ENCODE measurements at regions of chr7 and their contacts with region 1.

Region 1: DNA sequence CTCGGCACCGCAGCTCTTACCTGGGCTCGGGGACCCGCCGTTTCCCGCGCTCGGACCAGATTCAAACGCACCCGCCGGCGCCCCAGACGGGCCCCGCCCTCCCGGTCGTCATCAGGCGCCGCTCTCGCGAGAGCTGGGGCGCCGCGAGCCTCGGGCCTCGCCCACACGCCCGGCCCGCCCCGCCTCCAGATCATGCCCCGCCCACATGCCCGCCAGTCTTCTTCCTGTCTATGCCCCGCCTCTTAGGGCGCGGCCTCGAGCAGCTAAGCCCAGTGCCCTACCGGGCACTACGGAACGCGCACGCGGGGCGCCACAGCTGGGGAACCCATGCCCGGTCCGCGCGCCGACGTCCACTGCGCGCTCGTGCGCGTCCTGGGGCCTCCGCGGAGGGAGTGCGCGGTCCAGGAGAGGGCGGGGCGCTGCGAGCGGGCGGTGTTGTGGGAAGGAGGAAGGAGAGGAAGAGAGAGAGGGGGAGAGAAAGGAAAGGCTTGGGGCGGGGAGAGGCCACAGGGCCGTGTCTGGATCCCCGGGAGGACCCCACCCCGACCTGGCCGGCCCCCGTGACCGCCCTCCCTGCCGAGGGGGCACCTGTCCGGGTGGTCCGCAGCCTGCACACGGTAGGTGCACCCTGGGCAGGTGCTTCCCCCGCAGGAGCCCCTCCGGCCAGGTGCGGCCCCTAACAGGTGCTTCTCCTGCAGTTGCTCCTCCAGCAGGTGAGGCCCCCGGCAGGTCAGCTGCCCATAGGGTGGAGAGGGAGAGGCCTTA is at the start of gene NCAPG2:
- DNase-seq: peak; percentile 99
- H3K4me3 ChIP-seq: peak within 1 kb of the TSS; percentile 52 to 89 (median 68)
- H3K27ac ChIP-seq: peak within 1 kb of the TSS; percentile 18 to 88 (median 81)
- H3K4me1 ChIP-seq: peaks cover 0 to 6% of the 10 kb centered on the region in 2 donors
- H3K27me3 ChIP-seq: no peaks in the 10 kb centered on the region
- CTCF ChIP-seq: peak in 3 of 6 experiments; percentile 37 to 63 (median 42)
- POLR2A ChIP-seq: peak in 1 of 2 donors; percentile 96
- total RNA-seq, gene NCAPG2: 6.7 to 8.3 (median 7.7) TPM

Region 2: GRCh38 chr7:158061026-158061630 is 643.8 kb before region 1 on chr7:
- intact Hi-C with region 1: no loop called
- DNase-seq: no peak
- H3K4me3 ChIP-seq: no peak overlapping the region
- H3K27ac ChIP-seq: no peak overlapping the region
- H3K4me1 ChIP-seq: no peaks in the 10 kb centered on the region
- H3K27me3 ChIP-seq: no peaks in the 10 kb centered on the region
- CTCF ChIP-seq: no peak
- POLR2A ChIP-seq: no peak

Region 3: GRCh38 chr7:158595069-158595468 is 109.8 kb before region 1 on chr7:
- intact Hi-C with region 1: no loop called
- DNase-seq: no peak
- H3K4me3 ChIP-seq: no peak overlapping the region
- H3K27ac ChIP-seq: no peak overlapping the region
- H3K4me1 ChIP-seq: no peaks in the 10 kb centered on the region
- H3K27me3 ChIP-seq: no peaks in the 10 kb centered on the region
- CTCF ChIP-seq: no peak
- POLR2A ChIP-seq: no peak

Region 4: DNA sequence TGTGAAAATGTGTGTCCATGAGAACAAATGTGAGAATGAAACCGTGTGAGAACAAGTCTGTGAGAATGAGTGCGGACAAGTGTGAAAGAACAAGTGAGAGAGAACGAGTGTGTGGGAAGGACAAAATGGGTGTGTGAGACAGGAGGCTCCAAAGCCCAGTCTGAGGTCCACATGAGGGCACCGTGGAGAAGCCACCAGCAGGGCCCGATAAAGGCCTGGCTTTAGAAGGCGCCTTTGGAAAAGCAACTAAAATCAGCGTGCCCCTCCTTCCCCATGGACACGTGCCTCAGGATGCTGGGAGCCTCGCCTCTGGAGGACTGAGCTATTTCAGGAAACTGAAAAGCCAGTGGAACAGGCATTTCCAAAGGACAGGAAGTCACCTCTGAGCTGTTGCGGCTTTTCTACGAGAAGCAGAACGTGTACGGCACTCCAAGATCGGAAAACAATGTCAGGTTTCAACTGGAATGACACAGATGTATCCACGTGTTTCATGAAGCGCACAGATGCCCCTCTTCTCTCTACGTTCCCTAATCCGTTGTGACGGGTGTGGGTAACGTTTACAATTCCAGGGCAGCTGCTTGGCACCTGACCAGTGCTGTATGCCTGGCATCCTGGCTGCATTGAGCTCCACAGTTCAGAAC is 78.0 kb after region 1 on chr7:
- intact Hi-C with region 1: no loop called
- DNase-seq: peak in 1 of 2 donors; percentile 18
- H3K4me3 ChIP-seq: no peak overlapping the region
- H3K27ac ChIP-seq: peak overlapping the region in 2 of 3 donors; percentile 37 to 63
- H3K4me1 ChIP-seq: peaks cover 6 to 15% of the 10 kb centered on the region in 2 donors
- H3K27me3 ChIP-seq: no peaks in the 10 kb centered on the region
- CTCF ChIP-seq: peak in 1 of 6 experiments; percentile 20
- POLR2A ChIP-seq: no peak

Region 5: DNA sequence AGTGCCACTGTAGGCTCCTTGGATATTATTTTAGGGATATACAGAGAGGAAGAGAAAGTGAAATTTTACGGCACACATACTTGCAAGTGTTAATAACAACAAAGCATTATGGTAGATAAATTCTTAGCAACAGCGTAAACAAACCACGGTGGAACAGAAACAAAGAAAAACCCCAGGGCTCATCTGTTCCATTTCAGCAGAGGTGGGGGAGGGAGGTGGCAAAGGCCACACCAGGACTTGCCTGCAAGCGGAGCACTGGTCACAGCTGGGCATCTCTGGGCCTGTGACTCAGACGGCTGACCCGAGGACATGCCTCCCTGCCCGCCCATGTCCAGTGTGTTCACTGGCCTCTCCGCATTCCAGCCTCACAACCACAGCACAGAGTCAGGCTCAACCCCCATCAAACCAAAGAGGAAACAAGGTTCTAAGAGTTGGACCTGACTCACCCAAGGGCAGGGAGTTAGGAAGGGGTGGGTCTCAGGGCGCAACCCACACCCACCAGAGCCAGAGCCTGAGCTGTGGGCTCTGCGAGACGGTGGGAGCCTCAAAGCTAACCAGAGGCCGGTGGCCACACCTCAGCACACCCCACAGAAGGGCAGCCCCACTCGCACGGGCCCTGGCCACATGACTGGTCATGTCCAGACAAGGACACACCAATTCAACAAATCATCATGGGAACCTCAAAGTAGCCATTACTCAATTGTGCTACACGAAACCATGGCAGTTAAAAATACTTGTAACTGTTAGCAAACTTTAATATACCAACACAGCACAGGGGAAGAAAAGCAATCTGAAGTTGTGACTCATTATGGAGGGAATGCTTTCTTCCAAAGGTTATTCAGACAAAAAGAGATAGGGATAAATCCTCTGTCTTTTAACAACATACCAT is 113.7 kb after region 1 on chr7:
- intact Hi-C with region 1: no loop called
- DNase-seq: peak; percentile 79 to 90
- H3K4me3 ChIP-seq: no peak overlapping the region
- H3K27ac ChIP-seq: peak overlapping the region; percentile 79 to 92 (median 87)
- H3K4me1 ChIP-seq: peaks cover 38 to 76% of the 10 kb centered on the region in 2 donors
- H3K27me3 ChIP-seq: no peaks in the 10 kb centered on the region
- CTCF ChIP-seq: no peak
- POLR2A ChIP-seq: peak in 1 of 2 donors; percentile 31

Region 6: GRCh38 chr7:158829342-158830210 is 124.7 kb after region 1 on chr7 and contains the start of gene ESYT2:
- intact Hi-C with region 1: loop called (anchors 10 kb)
- DNase-seq: peak; percentile 98
- H3K4me3 ChIP-seq: peak within 1 kb of the TSS; percentile 42 to 98 (median 88)
- H3K27ac ChIP-seq: peak within 1 kb of the TSS; percentile 99 to 100 (median 100)
- H3K4me1 ChIP-seq: peaks cover 13 to 19% of the 10 kb centered on the region in 2 donors
- H3K27me3 ChIP-seq: no peaks in the 10 kb centered on the region
- CTCF ChIP-seq: peak in 3 of 6 experiments; percentile 3 to 16 (median 12)
- POLR2A ChIP-seq: peak; percentile 88 to 99
- total RNA-seq, gene ESYT2: 102 to 123 (median 116) TPM

Region 7: DNA sequence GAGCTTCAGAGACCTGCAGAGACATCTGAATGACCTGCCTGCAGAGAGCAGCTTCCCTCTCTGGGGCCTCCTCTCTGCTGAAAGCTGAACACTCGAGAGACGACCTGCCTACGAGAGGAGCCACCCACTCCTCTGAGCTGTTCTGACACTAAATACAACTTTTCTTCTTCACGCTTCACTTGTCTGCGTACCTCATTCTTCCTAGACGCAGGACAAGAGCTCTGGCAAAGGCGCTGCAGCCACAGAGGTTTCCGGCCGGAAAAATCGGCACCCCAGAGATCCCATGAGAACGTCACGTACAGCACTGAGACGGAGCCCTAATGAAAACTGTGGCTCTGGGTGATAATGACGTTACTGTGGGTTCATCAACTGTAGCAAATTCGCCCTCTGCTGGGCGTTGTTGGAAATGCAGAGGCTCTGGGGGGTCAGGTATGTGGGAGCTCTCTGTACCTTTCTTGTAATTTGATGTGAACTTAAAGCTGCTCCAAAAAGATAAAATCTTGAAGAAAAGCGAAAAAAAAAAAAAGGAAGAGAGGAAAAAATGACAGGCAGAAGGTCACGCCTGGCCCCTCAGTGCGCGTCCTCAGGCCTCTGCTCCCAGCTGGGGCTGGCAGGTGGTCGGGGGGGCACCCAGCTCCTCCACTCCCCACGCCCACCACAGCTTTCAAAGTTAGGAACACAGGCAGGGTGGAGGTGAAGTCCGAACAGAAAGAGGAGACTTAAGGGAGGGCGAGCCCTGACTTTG is 272.1 kb after region 1 on chr7:
- intact Hi-C with region 1: loop called (anchors 5 kb)
- DNase-seq: peak; percentile 50 to 56
- H3K4me3 ChIP-seq: peak overlapping the region in 1 of 3 donors; percentile 9
- H3K27ac ChIP-seq: no peak overlapping the region
- H3K4me1 ChIP-seq: no peaks in the 10 kb centered on the region
- H3K27me3 ChIP-seq: no peaks in the 10 kb centered on the region
- CTCF ChIP-seq: peak in 5 of 6 experiments; percentile 35 to 64 (median 48)
- POLR2A ChIP-seq: no peak